PC-3 (cell line): ENCODE measurements at regions of chr12 and their contacts with region 1.

Region 1: GRCh38 chr12:12611512-12612306 is at the start of gene CREBL2:
- DNase-seq: peak; percentile 87
- ATAC-seq: peak; percentile 68
- H3K4me3 ChIP-seq: peak within 1 kb of the TSS; percentile 86
- H3K27ac ChIP-seq: peak within 1 kb of the TSS; percentile 95
- H3K4me1 ChIP-seq: peaks cover 26% of the 10 kb centered on the region
- H3K27me3 ChIP-seq: no peaks in the 10 kb centered on the region
- CTCF ChIP-seq: no peak
- total RNA-seq, gene CREBL2: 11.7 and 14.2 TPM in 2 replicates

Region 2: GRCh38 chr12:12645485-12645884 is 33.8 kb after region 1 on chr12:
- CTCF ChIA-PET with region 1: no interaction called
- POLR2A ChIA-PET with region 1: no interaction called
- intact Hi-C with region 1: loop called (anchors 5 kb)
- DNase-seq: peak; percentile 28
- ATAC-seq: peak; percentile 40
- H3K4me3 ChIP-seq: no peak overlapping the region
- H3K27ac ChIP-seq: peak overlapping the region; percentile 82
- H3K4me1 ChIP-seq: peaks cover 19% of the 10 kb centered on the region
- H3K27me3 ChIP-seq: no peaks in the 10 kb centered on the region
- CTCF ChIP-seq: peak; percentile 63

Region 3: GRCh38 chr12:12859690-12860089 is 248.0 kb after region 1 on chr12:
- CTCF ChIA-PET with region 1: no interaction called
- POLR2A ChIA-PET with region 1: no interaction called
- intact Hi-C with region 1: no loop called
- DNase-seq: peak; percentile 75
- ATAC-seq: peak; percentile 90
- H3K4me3 ChIP-seq: no peak overlapping the region
- H3K27ac ChIP-seq: no peak overlapping the region; the same call in 1 of the 2 replicates
- H3K4me1 ChIP-seq: peaks cover 5% of the 10 kb centered on the region; the same call in 1 of the 2 replicates
- H3K27me3 ChIP-seq: no peaks in the 10 kb centered on the region
- CTCF ChIP-seq: no peak